ENCODE measurements at regions of chr2 and their contacts with region 1.

Region 1: DNA sequence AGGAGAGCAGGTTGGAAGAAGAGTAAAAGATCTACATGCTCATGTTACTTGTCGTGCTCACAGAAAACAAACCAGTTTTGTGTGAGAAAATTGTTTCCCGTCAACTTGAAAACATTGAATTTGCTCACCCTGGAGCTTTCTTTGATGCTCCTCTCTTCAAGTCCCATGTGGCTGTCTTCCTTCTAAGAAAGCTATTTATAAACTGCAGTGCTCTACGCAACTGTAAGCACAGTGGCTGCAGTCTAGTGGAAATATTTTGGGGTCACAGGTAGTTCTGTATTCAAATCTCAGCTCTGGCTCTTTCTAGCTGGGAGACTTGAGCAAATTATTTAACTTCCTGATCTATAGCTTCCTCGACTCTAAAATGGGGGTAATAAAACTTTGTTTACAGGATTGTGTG is 211.8 kb downstream of the PLCL1 start:
- DNase-seq: no peak
- H3K4me3 Mint-ChIP-seq: peak overlapping the region; percentile 27
- H3K27ac Mint-ChIP-seq: peak overlapping the region; percentile 64
- H3K4me1 Mint-ChIP-seq: peaks cover 28% of the 10 kb centered on the region
- H3K27me3 Mint-ChIP-seq: no peaks in the 10 kb centered on the region

Region 2: GRCh38 chr2:197969391-197969893 is 46.8 kb before region 1 on chr2:
- intact Hi-C with region 1: loop called (anchors 2 kb)
- DNase-seq: no peak
- H3K4me3 Mint-ChIP-seq: no peak overlapping the region
- H3K27ac Mint-ChIP-seq: no peak overlapping the region
- H3K4me1 Mint-ChIP-seq: no peaks in the 10 kb centered on the region
- H3K27me3 Mint-ChIP-seq: no peaks in the 10 kb centered on the region

Region 3: DNA sequence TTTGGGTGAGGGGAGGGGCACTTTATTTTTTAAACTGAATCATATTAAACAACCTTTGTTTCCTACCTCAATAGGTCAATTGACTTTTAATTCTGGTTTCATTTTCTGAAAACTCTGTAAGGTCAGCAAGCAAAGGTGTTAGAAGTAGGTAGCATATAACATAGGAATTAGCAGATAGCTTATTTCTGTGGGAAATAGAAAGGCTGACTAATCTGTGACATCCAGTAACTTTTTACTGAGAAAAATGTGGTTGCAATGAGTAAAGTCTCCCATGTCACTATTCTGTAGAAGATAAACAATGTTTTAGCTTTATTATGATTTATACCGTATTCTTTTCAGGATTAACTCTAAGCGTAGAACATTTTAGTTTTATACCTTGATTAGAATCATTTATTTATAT is 28.5 kb after region 1 on chr2:
- intact Hi-C with region 1: loop called (anchors 1 kb)
- DNase-seq: no peak
- H3K4me3 Mint-ChIP-seq: peak overlapping the region; percentile 19
- H3K27ac Mint-ChIP-seq: peak overlapping the region; percentile 76
- H3K4me1 Mint-ChIP-seq: peaks cover 14% of the 10 kb centered on the region
- H3K27me3 Mint-ChIP-seq: no peaks in the 10 kb centered on the region